HEK293T (cell line): ENCODE measurements at regions of chr13 and their contacts with region 1.

Region 1: GRCh38 chr13:76667551-76667950 is 218.7 kb downstream of the KCTD12 start:
- DNase-seq: no peak

Region 2: DNA sequence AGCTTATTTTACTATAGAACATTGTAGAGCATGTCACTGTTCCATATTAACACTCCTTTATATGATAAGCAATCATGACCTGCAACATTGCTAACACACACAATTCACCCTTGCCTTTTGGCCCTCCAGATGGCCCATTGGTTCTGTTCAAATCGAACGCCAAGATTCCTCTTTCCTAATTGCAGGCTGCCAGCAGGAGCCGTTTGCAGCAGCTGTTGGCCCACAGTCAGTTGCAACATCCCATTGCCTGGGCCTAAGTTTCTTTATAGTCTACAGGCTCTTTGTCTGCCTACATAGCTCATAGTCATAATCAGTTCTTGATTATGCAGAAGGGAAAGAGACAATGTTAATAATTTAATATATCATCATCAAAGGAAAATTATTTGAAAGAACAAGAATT is 181.0 kb after region 1 on chr13:
- CTCF ChIA-PET with region 1: no interaction called
- POLR2A ChIA-PET with region 1: no interaction called
- DNase-seq: no peak

Region 3: GRCh38 chr13:76903544-76904162 is 236.1 kb after region 1 on chr13:
- CTCF ChIA-PET with region 1: interaction called, 10 read pairs
- POLR2A ChIA-PET with region 1: no interaction called
- DNase-seq: peak; percentile 86